ENCODE measurements at regions of chr20 and their contacts with region 1.

Region 1: DNA sequence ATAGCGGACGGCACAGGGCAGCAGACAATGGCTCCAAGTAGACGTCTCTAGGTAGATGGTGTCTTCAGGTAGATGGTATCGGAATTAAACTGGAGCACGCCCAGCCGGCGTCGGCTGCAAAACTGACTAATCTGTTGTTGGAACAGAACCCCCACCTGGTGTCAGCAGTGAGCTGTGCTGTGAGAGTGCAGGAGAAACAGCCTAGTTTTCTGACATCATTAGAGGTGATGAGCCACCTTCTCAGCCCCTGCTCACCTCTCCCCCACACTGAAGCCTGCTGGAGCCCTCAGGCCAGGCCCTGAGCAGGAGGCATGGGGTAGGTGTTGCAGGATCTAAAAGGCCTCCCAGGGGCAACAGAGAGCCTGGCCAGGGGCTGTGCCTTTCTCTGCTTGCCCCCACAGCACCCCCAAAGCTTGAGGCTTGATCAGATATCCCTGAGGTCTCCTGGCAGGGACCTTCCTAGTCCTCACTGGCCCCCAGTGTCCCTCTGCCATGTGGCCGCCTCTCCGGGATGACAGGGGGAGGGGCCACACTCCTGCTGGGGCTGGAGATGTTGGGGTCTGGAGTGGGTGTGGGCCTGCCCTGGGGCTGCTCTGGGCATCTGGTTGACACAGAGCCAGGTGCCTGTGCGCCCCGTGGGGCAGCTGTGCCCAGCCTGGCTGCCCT is 6.9 kb upstream of the HELZ2 start:
- DNase-seq: peak; percentile 88
- ATAC-seq: peak; percentile 100
- H3K4me3 Mint-ChIP-seq: no peak overlapping the region
- H3K27ac Mint-ChIP-seq: no peak overlapping the region
- H3K4me1 Mint-ChIP-seq: peaks cover 4% of the 10 kb centered on the region
- H3K27me3 Mint-ChIP-seq: peaks cover 2% of the 10 kb centered on the region

Region 2: DNA sequence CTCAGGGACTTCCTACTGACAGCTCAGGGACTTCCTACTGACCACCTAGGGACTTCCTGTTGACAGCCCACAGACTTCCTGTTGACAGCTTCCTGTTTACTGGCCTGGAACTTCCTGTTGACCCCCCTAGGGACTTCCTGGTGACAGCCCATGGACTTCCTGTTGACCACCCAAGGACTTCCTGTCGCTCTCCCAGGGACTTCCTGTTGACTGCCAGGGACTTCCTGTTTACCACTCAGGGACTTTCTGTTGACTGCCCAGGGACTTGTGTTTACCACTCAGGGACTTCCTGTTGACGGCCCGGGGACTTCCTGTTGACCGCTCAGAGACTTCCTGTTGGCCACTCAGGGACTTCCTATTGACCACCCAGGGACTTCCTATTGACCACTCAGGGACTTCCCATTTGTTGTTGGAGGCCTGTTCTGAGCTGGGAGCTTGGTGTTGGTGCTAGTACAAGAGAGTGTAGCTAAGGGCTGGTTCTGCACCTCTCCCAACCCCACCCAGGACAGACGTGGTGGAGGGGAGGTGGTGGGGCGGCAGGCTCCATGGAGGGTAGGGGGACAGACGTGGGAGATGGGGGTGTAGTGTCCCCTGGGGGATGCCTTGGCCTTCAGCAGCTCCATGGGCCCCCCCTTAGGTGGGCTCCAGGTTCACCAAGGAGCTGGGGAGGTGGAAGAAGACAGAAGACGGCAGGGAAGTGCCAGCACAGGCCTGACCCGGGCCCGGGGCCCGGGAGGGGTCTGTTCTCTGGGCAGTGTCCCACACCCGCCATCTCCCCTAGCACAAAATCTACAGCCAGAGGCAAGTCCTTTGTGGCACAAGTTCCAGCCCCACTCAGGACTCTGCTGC is 253.8 kb before region 1 on chr20:
- CTCF ChIA-PET with region 1: no interaction called
- POLR2A ChIA-PET with region 1: no interaction called
- intact Hi-C with region 1: no loop called
- DNase-seq: no peak
- ATAC-seq: no peak
- H3K4me3 Mint-ChIP-seq: no peak overlapping the region
- H3K27ac Mint-ChIP-seq: no peak overlapping the region
- H3K4me1 Mint-ChIP-seq: no peaks in the 10 kb centered on the region
- H3K27me3 Mint-ChIP-seq: peaks cover 11% of the 10 kb centered on the region

Region 3: DNA sequence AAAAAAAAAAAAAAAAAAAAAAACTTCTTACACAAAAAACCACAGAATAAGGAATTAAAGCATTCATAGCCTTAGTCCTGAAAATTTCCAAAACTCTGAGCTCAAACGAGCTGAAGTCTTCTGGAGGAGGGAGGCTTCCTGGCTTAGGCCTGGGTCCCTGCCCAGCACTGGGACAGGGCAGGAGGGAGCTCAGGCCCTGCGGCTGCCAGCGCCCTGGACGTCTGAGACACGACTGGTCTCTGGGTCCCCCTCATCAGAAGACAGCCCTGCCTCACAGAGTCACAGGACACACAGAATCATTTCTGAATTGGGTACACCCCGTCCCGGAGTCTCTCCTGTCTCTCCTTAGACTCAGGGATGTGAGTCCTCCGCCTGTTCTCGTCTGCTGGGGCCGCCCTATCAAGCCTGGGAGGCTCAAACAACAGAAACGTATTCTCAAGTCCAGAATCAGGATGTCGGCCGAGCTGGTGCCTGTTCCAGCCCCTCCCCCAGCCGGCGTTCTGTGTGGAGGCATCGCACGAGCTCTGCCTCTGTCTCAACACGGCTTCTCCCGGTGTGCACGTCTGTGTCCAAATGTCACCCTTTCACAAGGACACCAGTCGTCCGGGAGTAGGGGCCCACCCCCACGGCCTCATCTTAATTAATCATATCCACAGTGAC is 210.7 kb after region 1 on chr20:
- CTCF ChIA-PET with region 1: interaction called, 3 read pairs
- POLR2A ChIA-PET with region 1: no interaction called
- intact Hi-C with region 1: loop called in 1 of 2 experiments (anchors 1 kb)
- DNase-seq: no peak
- ATAC-seq: no peak
- H3K4me3 Mint-ChIP-seq: no peak overlapping the region
- H3K27ac Mint-ChIP-seq: no peak overlapping the region
- H3K4me1 Mint-ChIP-seq: peaks cover 2% of the 10 kb centered on the region
- H3K27me3 Mint-ChIP-seq: peaks cover 2% of the 10 kb centered on the region

Measured in activated CD4-positive, alpha-beta T cell treated with anti-CD3 and anti-CD28 coated beads for 36 hours (primary cell).